Activated T-helper 1 cell treated with anti-CD3 and anti-CD28 coated beads, Interleukin-12 subunit alpha, Interleukin-12 subunit beta, Interleukin-2, Interleukin-4 antibody, amounts not matched to agents 30 ng/mL and 10 ng/mL and 1 ng/mL, durations not matched to agents 14 hours and 24 hours and 36 hours (primary cell): ENCODE measurements at regions of chr14 and their contacts with region 1.

Region 1: GRCh38 chr14:94136575-94137331 is 7.3 kb upstream of the IFI27L2 start:
- DNase-seq: peak; percentile 72
- H3K4me3 Mint-ChIP-seq: no peak overlapping the region
- H3K27ac Mint-ChIP-seq: no peak overlapping the region
- H3K4me1 Mint-ChIP-seq: peaks cover 10% of the 10 kb centered on the region
- H3K27me3 Mint-ChIP-seq: peaks cover 24% of the 10 kb centered on the region

Region 2: GRCh38 chr14:93655078-93655750 is 481.5 kb before region 1 on chr14:
- intact Hi-C with region 1: loop called (anchors 1 kb)
- DNase-seq: no peak
- H3K4me3 Mint-ChIP-seq: no peak overlapping the region
- H3K27ac Mint-ChIP-seq: no peak overlapping the region
- H3K4me1 Mint-ChIP-seq: no peaks in the 10 kb centered on the region
- H3K27me3 Mint-ChIP-seq: peaks cover 8% of the 10 kb centered on the region

Region 3: GRCh38 chr14:93892923-93893558 is 243.7 kb before region 1 on chr14:
- intact Hi-C with region 1: no loop called
- DNase-seq: peak; percentile 40
- H3K4me3 Mint-ChIP-seq: no peak overlapping the region
- H3K27ac Mint-ChIP-seq: no peak overlapping the region
- H3K4me1 Mint-ChIP-seq: no peaks in the 10 kb centered on the region
- H3K27me3 Mint-ChIP-seq: peaks cover 11% of the 10 kb centered on the region

Region 4: GRCh38 chr14:94001501-94002396 is 135.0 kb before region 1 on chr14:
- intact Hi-C with region 1: loop called (anchors 1 kb)
- DNase-seq: peak; percentile 56
- H3K4me3 Mint-ChIP-seq: peak overlapping the region; percentile 1
- H3K27ac Mint-ChIP-seq: peak overlapping the region; percentile 36
- H3K4me1 Mint-ChIP-seq: peaks cover 39% of the 10 kb centered on the region
- H3K27me3 Mint-ChIP-seq: peaks cover 2% of the 10 kb centered on the region

Region 5: GRCh38 chr14:94036313-94037050 is 100.3 kb before region 1 on chr14:
- intact Hi-C with region 1: loop called (anchors 1 kb)
- DNase-seq: peak; percentile 62
- H3K4me3 Mint-ChIP-seq: no peak overlapping the region
- H3K27ac Mint-ChIP-seq: no peak overlapping the region
- H3K4me1 Mint-ChIP-seq: peaks cover 5% of the 10 kb centered on the region
- H3K27me3 Mint-ChIP-seq: no peaks in the 10 kb centered on the region

Region 6: DNA sequence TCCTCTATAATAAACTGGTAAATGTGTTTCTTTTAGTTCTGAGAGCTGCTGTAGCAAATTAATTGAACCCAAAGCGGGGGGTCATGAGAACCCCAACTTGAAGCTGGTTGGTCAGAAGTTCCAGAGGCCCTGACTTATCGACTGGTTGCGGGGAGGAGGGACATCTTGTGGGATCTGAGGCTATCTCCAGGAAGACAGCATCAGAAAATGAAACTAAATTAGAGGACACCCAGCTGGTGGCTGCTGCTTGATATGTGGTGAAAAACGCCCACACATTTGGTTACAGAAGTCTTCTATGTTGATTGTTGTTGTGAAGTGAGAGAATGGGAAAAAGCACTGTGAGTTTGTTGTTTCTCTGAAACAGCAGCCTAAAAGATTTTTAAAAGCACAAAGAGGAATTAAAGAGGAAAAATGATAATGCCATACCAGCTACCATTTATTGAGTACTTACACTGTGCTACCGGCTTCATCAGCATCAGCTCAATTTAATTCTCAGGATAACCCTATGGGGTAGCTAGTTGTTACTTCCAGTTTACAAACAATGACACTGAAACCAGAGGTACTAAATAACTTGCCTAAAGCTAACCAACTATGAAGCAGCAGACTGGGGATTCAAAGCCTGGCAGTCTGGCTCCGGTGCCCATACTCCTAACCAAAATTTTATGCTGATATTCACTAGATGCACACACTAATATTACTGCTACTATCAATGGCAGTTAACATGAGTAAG is 80.0 kb before region 1 on chr14:
- intact Hi-C with region 1: loop called (anchors 1 kb)
- DNase-seq: peak; percentile 45
- H3K4me3 Mint-ChIP-seq: peak overlapping the region; percentile 6
- H3K27ac Mint-ChIP-seq: peak overlapping the region; percentile 77
- H3K4me1 Mint-ChIP-seq: peaks cover 70% of the 10 kb centered on the region
- H3K27me3 Mint-ChIP-seq: no peaks in the 10 kb centered on the region

Region 7: GRCh38 chr14:94180655-94181271 is 44.0 kb after region 1 on chr14:
- intact Hi-C with region 1: loop called (anchors 1 kb)
- DNase-seq: no peak
- H3K4me3 Mint-ChIP-seq: peak overlapping the region; percentile 11
- H3K27ac Mint-ChIP-seq: peak overlapping the region; percentile 51
- H3K4me1 Mint-ChIP-seq: peaks cover 11% of the 10 kb centered on the region
- H3K27me3 Mint-ChIP-seq: peaks cover 30% of the 10 kb centered on the region